ENCODE measurements at regions of chr5 and their contacts with region 1.

Region 1: GRCh38 chr5:169554251-169554650 is 29.3 kb upstream of the SPDL1 start:
- DNase-seq: no peak
- H3K4me3 ChIP-seq: no peak overlapping the region
- H3K27ac ChIP-seq: no peak overlapping the region
- H3K4me1 ChIP-seq: no peaks in the 10 kb centered on the region
- H3K27me3 ChIP-seq: no peaks in the 10 kb centered on the region
- CTCF ChIP-seq: no peak

Region 2: DNA sequence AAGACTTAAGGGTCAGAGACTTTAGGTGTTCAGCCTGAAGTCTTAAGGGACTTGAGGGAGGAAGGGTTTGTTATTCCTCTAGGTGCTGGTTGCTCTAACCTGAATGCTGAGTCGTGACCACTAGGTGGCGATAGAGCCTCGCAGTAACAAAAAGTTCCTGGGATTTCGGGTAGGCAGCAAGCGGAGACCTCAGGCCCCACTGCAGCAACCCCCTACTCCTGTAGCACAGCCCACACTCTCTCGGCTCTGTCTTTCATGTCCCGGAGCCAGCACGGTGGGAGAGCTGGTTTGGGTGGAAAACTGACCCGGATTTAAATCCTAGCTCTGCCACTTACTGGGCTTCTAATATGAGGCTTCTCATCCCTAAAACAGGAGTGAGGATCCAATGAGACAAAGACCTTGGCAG is 874.7 kb before region 1 on chr5:
- intact Hi-C with region 1: loop called (anchors 10 kb)
- DNase-seq: peak; percentile 70 to 81
- H3K4me3 ChIP-seq: no peak overlapping the region
- H3K27ac ChIP-seq: peak overlapping the region in 1 of 2 donors; percentile 78
- H3K4me1 ChIP-seq: peaks cover 0 to 30% (median 15%) of the 10 kb centered on the region in 4 donors
- H3K27me3 ChIP-seq: no peaks in the 10 kb centered on the region
- CTCF ChIP-seq: peak; percentile 81 to 90

Region 3: DNA sequence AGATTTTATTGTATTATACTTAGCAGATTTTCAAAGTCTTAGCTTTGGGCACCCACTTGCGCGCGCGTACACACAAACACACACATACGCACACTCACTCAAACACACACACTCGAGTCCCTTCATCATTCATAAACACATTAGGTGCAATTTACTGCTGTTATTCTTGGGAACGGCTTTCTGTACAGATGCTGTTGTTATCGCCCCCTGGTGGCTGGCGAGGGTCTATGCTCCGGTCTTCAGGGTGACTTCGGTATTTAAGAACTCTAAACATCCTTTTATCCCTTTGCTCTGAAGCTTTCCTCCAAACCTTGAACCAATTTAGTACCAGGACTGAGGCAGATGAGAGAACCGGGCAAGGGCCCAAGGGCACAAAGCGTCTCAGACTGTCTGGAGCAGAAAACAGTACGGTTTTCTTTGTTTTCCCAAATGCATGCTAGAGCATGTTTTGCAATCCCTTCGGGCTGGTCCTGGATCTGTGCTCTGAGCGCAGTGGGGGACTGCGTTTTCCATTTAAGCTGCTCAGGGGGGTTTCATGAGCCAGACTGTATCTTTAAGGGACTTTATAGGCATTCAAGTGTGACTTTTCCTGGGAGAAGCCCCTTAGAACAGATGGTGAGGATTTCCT is 251.6 kb before region 1 on chr5:
- intact Hi-C with region 1: loop called (anchors 10 kb)
- DNase-seq: peak; percentile 74 to 80
- H3K4me3 ChIP-seq: peak overlapping the region in 1 of 2 donors; percentile 75
- H3K27ac ChIP-seq: peak overlapping the region in 1 of 2 donors; percentile 91
- H3K4me1 ChIP-seq: peaks cover 0 to 35% (median 22%) of the 10 kb centered on the region in 4 donors
- H3K27me3 ChIP-seq: no peaks in the 10 kb centered on the region
- CTCF ChIP-seq: peak; percentile 92

Region 4: GRCh38 chr5:169610606-169611005 is 56.4 kb after region 1 on chr5:
- intact Hi-C with region 1: no loop called
- DNase-seq: no peak
- H3K4me3 ChIP-seq: no peak overlapping the region
- H3K27ac ChIP-seq: no peak overlapping the region
- H3K4me1 ChIP-seq: no peaks in the 10 kb centered on the region
- H3K27me3 ChIP-seq: no peaks in the 10 kb centered on the region
- CTCF ChIP-seq: no peak

Measured in tibial artery (tissue), 4 donors.